Esophagus squamous epithelium (tissue), 5 donors: ENCODE measurements at regions of chr18 and their contacts with region 1.

Region 1: GRCh38 chr18:48300463-48300961 is 108.7 kb downstream of the ZBTB7C start:
- DNase-seq: no peak
- H3K4me3 ChIP-seq: no peak overlapping the region
- H3K27ac ChIP-seq: peak overlapping the region in 3 of 4 donors; percentile 4 to 57 (median 55)
- H3K4me1 ChIP-seq: peaks cover 10 to 30% (median 11%) of the 10 kb centered on the region in 3 donors
- H3K27me3 ChIP-seq: no peaks in the 10 kb centered on the region
- CTCF ChIP-seq: no peak
- POLR2A ChIP-seq: no peak

Region 2: GRCh38 chr18:48230467-48231113 is 69.9 kb before region 1 on chr18:
- intact Hi-C with region 1: loop called (anchors 10 kb)
- DNase-seq: no peak
- H3K4me3 ChIP-seq: no peak overlapping the region
- H3K27ac ChIP-seq: no peak overlapping the region
- H3K4me1 ChIP-seq: peaks cover 8 to 42% (median 33%) of the 10 kb centered on the region in 3 donors
- H3K27me3 ChIP-seq: no peaks in the 10 kb centered on the region
- CTCF ChIP-seq: peak in 5 of 6 experiments; percentile 40 to 75 (median 48)
- POLR2A ChIP-seq: no peak

Region 3: DNA sequence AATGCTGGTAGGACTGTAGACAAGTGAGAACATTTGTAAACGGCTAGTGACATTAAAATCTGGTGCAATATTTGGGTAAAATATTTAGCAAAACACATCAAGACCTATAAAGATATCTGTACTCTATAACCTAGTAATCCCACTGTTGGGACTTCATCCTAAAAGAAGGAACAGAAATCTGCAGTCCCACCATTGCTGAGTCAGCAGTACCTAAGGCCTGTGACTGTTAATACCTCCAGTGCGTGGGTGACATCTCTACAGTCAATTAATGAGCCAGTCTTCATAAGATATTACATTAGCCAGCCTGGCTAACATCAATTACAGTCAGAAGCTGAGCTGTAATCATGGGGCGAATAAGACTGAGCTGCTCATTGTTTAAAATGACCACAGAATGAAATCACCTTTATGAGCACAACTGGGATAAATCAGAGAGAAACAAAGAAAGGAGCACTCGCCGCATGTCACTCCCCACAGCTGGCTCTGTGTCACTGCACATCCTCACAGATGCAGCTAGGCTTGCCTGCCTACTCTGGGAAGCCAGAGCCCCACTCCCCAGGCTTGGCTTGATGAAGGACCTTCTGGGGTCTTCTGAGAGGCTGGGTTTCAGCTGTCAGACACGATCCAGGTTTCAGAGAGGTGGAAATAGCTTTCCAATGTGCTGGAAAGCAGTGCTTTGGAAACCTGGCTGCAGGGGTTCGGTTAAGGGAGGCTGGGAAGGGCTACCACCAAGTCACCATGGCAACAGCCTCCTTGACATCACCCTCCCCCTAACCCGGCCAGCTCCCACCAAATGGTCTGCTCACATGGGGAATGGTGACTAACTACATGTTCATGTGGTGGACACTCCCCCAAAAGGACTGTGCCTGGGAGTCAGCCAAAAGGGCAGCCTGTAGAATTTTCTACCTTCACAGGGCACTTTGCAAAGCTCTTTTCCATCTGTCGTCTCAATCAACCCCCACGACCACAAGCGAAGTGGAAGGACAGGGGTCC is 36.3 kb before region 1 on chr18:
- intact Hi-C with region 1: no loop called
- DNase-seq: no peak
- H3K4me3 ChIP-seq: no peak overlapping the region
- H3K27ac ChIP-seq: no peak overlapping the region
- H3K4me1 ChIP-seq: no peaks in the 10 kb centered on the region
- H3K27me3 ChIP-seq: no peaks in the 10 kb centered on the region
- CTCF ChIP-seq: no peak
- POLR2A ChIP-seq: no peak

Region 4: GRCh38 chr18:48374423-48375149 is 74.1 kb after region 1 on chr18:
- intact Hi-C with region 1: no loop called
- DNase-seq: no peak
- H3K4me3 ChIP-seq: peak overlapping the region in 1 of 4 donors; percentile 33
- H3K27ac ChIP-seq: peak overlapping the region; percentile 16 to 76 (median 66)
- H3K4me1 ChIP-seq: peaks cover 7 to 22% (median 11%) of the 10 kb centered on the region in 3 donors
- H3K27me3 ChIP-seq: no peaks in the 10 kb centered on the region
- CTCF ChIP-seq: no peak
- POLR2A ChIP-seq: no peak